ENCODE measurements at regions of chr1 and their contacts with region 1.

Region 1: DNA sequence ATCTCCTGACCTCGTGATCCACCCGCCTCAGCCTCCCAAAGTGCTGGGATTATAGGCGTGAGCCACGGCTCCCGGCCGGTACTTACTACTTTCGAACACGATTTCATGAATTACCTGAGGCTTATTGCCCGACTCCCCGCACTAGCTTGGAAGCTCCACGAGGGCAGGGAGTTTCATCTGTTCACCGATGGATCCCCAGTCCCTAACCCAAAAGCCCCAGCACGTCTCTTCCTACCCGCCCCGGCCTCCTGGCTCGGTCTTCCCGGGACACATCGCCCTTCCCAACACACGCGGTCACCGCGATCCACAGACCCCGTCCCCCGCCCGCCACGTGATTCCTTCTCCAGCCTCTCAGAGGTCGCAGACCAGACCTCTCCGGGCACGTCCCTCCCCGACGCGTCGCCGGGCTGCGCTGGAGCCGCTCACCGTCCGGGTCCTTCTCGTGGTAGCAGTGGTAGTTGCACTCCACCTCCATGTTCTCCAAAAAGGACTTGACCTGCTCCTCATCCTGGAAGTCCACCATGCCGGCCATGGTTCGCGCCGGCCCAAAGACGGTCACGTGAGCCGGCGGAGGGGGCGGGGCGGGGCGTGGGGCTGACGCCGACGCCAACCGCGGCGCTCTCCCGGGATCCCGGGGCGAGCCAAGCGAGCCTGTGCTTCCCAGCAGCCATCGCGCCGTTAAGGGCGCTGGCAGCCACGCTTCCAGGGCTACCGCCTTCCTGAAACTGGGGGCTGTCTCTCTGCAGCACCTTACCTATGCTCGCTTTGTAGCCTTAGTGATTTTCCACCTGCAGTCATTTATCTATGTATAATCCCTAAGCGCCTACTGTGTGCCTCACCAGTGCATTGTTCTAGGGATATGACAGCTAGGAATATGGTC is at the start of gene COA7:
- DNase-seq: peak; percentile 91
- ATAC-seq: peak; percentile 92 to 93
- total RNA-seq, gene COA7: 15.3 to 24.3 TPM

Region 2: GRCh38 chr1:52659356-52659755 is 38.7 kb before region 1 on chr1:
- intact Hi-C with region 1: no loop called
- DNase-seq: no peak
- ATAC-seq: no peak

Region 3: GRCh38 chr1:52927212-52928014 is 229.4 kb after region 1 on chr1 and contains the start of gene SCP2:
- intact Hi-C with region 1: loop called in 1 of 2 experiments (anchors 10 kb)
- DNase-seq: peak; percentile 88
- ATAC-seq: peak; percentile 96 to 98
- total RNA-seq, gene SCP2: 126 to 148 TPM